MCF 10A (cell line): ENCODE measurements at regions of chr17 and their contacts with region 1.

Region 1: GRCh38 chr17:49603720-49604119 is 28.0 kb downstream of the NXPH3 start:
- DNase-seq: no peak
- H3K4me3 Mint-ChIP-seq: no peak overlapping the region
- H3K27ac Mint-ChIP-seq: no peak overlapping the region
- H3K4me1 Mint-ChIP-seq: no peaks in the 10 kb centered on the region
- H3K27me3 Mint-ChIP-seq: no peaks in the 10 kb centered on the region
- CTCF ChIP-seq: no peak

Region 2: DNA sequence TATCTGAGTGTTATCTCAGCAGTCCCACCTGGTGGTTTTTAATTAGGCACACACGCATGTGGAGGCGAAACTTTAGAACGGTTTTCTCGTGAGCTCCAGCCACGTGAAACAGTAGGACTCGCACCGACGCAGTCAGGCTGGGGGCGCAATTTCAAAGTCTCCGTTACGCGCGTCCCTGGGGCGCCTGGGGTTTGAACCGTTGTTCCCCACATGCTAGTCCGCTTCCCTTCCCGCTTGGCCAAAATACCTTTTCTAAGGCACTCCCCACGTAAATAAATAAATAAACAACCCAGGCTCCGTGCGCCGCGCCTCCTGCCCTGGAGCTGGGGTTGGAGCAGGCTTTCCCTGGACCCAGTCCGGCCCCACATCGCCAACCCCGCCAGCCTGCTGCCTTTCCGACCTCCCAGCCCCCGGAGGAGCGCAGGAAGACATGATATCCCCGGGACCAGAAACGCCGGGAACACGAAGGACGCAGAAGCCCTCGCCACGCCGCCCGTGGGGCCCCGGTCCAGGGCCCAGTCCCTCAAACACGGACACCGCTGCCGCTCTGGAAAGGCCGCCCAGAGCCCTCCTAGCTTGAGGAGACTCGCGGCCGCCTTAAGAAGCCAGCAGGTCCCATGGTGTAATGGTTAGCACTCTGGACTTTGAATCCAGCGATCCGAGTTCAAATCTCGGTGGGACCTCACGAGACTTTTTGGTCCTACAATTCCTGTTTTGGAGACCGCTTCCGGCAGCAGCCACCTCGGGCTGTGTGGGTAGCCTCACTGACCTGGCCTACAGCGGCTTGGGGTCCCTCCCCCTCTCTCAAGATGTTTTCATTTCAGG is 411.6 kb before region 1 on chr17:
- CTCF ChIA-PET with region 1: no interaction called
- POLR2A ChIA-PET with region 1: no interaction called
- intact Hi-C with region 1: no loop called
- DNase-seq: peak; percentile 93
- H3K4me3 Mint-ChIP-seq: peak overlapping the region; percentile 96
- H3K27ac Mint-ChIP-seq: peak overlapping the region; percentile 96
- H3K4me1 Mint-ChIP-seq: no peaks in the 10 kb centered on the region
- H3K27me3 Mint-ChIP-seq: no peaks in the 10 kb centered on the region
- CTCF ChIP-seq: peak; percentile 21

Region 3: DNA sequence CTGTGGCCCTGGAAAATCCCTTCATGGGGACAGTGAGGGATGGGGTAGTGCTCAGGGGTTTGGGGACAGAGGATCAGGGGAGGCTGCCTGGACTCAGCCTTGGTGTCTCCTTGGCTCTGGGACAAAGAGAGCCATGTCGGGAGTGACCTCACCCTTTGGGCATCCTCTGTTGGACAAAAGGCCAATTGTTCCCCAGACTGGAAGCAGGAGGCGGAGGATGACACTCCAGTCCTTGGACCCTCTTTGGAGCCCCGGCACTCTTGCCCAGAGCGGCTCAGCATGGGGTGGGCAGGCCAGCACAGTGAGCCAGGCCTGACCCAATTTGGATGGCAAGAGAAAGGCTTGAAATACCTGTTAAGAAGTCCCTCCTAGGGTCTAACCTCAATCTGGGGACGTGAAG is 149.7 kb before region 1 on chr17:
- CTCF ChIA-PET with region 1: no interaction called
- POLR2A ChIA-PET with region 1: no interaction called
- intact Hi-C with region 1: no loop called
- DNase-seq: no peak
- H3K4me3 Mint-ChIP-seq: no peak overlapping the region
- H3K27ac Mint-ChIP-seq: no peak overlapping the region
- H3K4me1 Mint-ChIP-seq: no peaks in the 10 kb centered on the region
- H3K27me3 Mint-ChIP-seq: peaks cover 36% of the 10 kb centered on the region
- CTCF ChIP-seq: no peak

Region 4: GRCh38 chr17:49618028-49618611 is 14.4 kb after region 1 on chr17:
- CTCF ChIA-PET with region 1: interaction called, 6 read pairs
- POLR2A ChIA-PET with region 1: interaction called, 10 read pairs
- intact Hi-C with region 1: no loop called
- DNase-seq: no peak
- H3K4me3 Mint-ChIP-seq: no peak overlapping the region
- H3K27ac Mint-ChIP-seq: no peak overlapping the region
- H3K4me1 Mint-ChIP-seq: no peaks in the 10 kb centered on the region
- H3K27me3 Mint-ChIP-seq: no peaks in the 10 kb centered on the region
- CTCF ChIP-seq: no peak

Region 5: DNA sequence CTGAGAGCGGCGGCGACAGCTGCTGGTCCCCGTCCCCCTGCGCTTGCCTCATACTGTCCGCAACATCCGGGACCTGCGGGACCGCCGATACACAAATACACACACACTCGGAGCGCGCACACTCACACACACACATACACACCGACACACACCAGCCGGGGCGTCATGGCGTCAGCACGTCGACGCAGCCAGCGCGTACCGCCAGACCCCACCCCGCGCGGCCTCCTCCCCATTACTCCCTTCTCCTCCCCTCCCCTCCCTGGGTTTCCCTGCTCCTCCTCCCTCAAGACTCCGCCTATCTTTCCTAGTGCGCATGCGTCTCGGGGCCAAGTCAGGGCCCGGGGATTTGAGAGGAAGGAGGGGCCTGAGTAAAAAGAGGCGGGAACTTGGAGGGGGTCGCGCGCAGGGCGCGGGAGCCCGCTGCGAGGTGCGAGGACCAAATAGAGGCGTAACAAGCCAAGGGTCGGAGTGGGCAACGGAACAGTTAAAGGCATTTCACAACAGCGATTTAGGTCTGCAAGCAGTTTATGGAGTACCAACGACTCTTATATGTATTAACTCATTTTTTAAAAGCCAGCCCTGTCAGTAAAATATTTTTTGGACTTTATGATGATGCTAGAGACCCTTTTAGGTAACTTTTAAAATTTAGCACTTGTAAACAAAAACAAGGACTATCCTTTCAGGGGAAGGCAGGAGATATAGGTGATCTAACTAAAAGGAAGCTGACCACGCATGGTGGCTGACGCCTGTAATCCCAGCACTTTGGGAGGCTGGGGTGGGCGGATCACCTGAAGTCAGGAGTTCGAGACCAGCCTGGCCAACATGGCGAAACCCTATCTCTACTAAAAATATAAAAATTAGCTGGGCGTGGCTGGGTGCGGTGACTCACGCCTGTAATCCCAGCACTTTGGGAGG is 74.5 kb after region 1 on chr17 and contains the start of gene SPOP:
- CTCF ChIA-PET with region 1: no interaction called
- POLR2A ChIA-PET with region 1: no interaction called
- intact Hi-C with region 1: no loop called
- DNase-seq: peak; percentile 99
- H3K4me3 Mint-ChIP-seq: peak within 1 kb of the TSS; percentile 77
- H3K27ac Mint-ChIP-seq: peak within 1 kb of the TSS; percentile 57
- H3K4me1 Mint-ChIP-seq: peaks cover 10% of the 10 kb centered on the region
- H3K27me3 Mint-ChIP-seq: no peaks in the 10 kb centered on the region
- CTCF ChIP-seq: no peak
- total RNA-seq, gene SPOP: 42.1 and 52.3 TPM in 2 replicates